ENCODE measurements at regions of chrX and their contacts with region 1.

Region 1: GRCh38 chrX:119235872-119236622 is at the start of gene PGRMC1:
- DNase-seq: peak; percentile 83
- H3K4me3 Mint-ChIP-seq: peak within 1 kb of the TSS; percentile 87
- H3K27ac Mint-ChIP-seq: peak within 1 kb of the TSS; percentile 78
- H3K4me1 Mint-ChIP-seq: peaks cover 32% of the 10 kb centered on the region
- H3K27me3 Mint-ChIP-seq: peaks cover 32% of the 10 kb centered on the region
- CTCF ChIP-seq: no peak
- total RNA-seq, gene PGRMC1: 121 and 126 TPM in 2 replicates

Region 2: DNA sequence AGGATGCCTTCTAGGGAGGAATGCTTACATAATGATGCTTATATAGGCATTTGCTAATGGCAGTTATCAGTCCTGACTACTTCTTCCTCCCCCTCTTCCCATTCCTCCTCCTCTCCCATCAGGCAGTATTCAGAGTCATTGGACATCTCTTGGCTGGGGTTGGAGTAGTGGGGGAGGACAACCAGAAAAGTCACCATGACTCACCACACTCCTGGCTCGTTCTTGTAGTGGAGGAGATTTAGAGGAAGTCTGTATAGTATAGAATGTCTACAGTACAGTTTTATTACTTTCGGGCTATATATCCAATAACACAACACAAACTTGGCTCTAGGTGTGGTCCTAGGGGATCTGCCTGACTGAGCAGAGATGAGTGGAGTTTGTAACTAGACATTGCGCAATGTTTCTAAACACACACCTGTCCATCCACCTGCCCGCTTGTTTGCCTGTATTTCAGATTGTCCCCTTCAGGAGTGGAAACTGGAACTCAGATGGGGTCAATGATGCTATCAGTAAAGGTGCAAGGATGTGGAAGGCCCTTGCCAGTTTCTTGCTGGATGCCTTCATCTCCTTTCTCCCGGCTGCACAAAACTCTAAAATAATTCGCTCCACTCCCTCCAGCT is 80.5 kb before region 1 on chrX:
- CTCF ChIA-PET with region 1: no interaction called
- intact Hi-C with region 1: loop called (anchors 2 kb)
- DNase-seq: no peak
- H3K4me3 Mint-ChIP-seq: no peak overlapping the region
- H3K27ac Mint-ChIP-seq: no peak overlapping the region
- H3K4me1 Mint-ChIP-seq: no peaks in the 10 kb centered on the region
- H3K27me3 Mint-ChIP-seq: peaks cover 43% of the 10 kb centered on the region
- CTCF ChIP-seq: no peak

Measured in Calu3 (cell line).